ENCODE measurements at regions of chr19 and their contacts with region 1.

Region 1: GRCh38 chr19:35693830-35694599 is 10.3 kb upstream of the ZBTB32 start:
- DNase-seq: peak; percentile 92
- ATAC-seq: peak; percentile 100
- H3K4me3 ChIP-seq: no peak overlapping the region
- H3K4me3 Mint-ChIP-seq: no peak overlapping the region
- H3K27ac ChIP-seq: no peak overlapping the region
- H3K27ac Mint-ChIP-seq: no peak overlapping the region
- H3K4me1 ChIP-seq: no peaks in the 10 kb centered on the region
- H3K4me1 Mint-ChIP-seq: no peaks in the 10 kb centered on the region
- H3K27me3 ChIP-seq: no peaks in the 10 kb centered on the region
- H3K27me3 Mint-ChIP-seq: no peaks in the 10 kb centered on the region
- CTCF ChIP-seq: peak; percentile 99

Region 2: DNA sequence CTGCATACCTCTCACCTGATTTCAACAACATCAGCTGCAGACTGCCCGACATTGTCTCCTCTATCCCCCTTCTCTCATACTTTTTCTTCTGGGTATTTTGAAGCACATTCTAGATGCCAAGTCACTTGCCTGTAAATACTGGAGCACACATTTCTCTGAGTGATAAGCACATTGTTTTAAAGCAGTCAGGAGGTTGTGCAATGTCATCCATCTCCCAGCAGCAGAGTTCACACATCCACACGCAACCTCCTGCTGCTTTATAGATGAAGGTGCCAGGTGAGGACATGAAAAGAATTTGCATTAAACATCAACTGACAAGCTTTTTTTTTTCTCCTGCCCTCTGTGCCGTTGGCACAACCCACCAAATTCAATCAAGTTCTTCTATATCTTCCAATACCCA is 22.2 kb before region 1 on chr19:
- CTCF ChIA-PET with region 1: no interaction called
- POLR2A ChIA-PET with region 1: no interaction called
- intact Hi-C with region 1: no loop called
- DNase-seq: no peak
- ATAC-seq: no peak
- H3K4me3 ChIP-seq: no peak overlapping the region
- H3K4me3 Mint-ChIP-seq: no peak overlapping the region
- H3K27ac ChIP-seq: no peak overlapping the region
- H3K27ac Mint-ChIP-seq: no peak overlapping the region
- H3K4me1 ChIP-seq: peaks cover 8 to 9% of the 10 kb centered on the region in 2 donors
- H3K4me1 Mint-ChIP-seq: peaks cover 7% of the 10 kb centered on the region
- H3K27me3 ChIP-seq: peaks cover 0 to 37% (median 13%) of the 10 kb centered on the region in 4 experiments
- H3K27me3 Mint-ChIP-seq: peaks cover 30% of the 10 kb centered on the region
- CTCF ChIP-seq: no peak

Region 3: DNA sequence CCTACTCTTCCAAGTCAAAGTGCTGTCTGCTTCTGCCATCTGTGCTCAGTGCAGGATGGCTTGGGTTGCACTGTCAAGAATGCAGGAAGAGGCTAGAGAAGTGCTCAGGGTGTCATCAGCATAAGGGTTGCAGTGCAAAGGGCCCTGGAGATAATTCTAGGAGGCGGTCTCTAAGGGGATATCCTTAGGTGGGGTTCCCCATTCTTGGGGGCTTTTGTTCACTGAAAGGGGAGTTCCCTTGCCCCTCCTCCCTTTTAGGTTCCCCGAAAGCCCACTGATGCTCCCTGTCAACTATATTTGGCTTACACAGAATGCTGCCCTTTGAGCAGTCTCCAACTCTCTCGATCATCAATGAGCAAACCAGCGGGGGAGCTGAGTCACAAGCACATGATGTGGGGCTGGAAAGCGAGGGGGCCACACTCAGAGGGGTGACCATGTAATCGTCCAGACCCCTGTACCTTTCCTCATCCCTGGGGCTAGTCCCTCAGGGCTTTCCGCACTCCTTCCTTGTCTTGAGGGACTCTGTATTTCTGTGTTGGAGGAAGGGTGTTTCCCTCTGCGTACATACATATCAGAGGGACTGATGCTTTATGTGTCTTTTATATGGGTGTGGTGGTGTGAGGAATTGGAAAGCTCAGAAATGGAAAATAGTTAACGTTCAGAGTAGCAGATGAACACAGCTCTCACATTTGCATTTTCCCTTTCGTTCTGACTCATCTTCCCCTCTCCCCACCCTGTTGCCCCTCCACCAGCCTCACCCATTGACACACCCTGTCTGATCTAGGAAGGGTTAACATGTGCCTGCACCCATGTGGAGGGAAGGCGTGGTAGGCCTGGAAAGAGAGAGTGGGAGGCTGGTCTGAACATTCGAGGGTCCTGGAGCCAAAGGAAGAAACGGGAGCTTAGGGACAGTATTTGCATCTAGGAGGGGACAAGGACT is 17.0 kb after region 1 on chr19:
- CTCF ChIA-PET with region 1: interaction called, 123 read pairs
- POLR2A ChIA-PET with region 1: interaction called, 7 read pairs
- intact Hi-C with region 1: loop called (anchors 1 kb)
- DNase-seq: peak; percentile 73
- ATAC-seq: peak; percentile 55
- H3K4me3 ChIP-seq: peak overlapping the region in 2 of 5 experiments; percentile 23 to 30
- H3K4me3 Mint-ChIP-seq: peak overlapping the region; percentile 98
- H3K27ac ChIP-seq: peak overlapping the region; percentile 85
- H3K27ac Mint-ChIP-seq: peak overlapping the region; percentile 99
- H3K4me1 ChIP-seq: peaks cover 29 to 64% of the 10 kb centered on the region in 2 donors
- H3K4me1 Mint-ChIP-seq: peaks cover 54% of the 10 kb centered on the region
- H3K27me3 ChIP-seq: no peaks in the 10 kb centered on the region
- H3K27me3 Mint-ChIP-seq: no peaks in the 10 kb centered on the region
- CTCF ChIP-seq: no peak

Region 4: DNA sequence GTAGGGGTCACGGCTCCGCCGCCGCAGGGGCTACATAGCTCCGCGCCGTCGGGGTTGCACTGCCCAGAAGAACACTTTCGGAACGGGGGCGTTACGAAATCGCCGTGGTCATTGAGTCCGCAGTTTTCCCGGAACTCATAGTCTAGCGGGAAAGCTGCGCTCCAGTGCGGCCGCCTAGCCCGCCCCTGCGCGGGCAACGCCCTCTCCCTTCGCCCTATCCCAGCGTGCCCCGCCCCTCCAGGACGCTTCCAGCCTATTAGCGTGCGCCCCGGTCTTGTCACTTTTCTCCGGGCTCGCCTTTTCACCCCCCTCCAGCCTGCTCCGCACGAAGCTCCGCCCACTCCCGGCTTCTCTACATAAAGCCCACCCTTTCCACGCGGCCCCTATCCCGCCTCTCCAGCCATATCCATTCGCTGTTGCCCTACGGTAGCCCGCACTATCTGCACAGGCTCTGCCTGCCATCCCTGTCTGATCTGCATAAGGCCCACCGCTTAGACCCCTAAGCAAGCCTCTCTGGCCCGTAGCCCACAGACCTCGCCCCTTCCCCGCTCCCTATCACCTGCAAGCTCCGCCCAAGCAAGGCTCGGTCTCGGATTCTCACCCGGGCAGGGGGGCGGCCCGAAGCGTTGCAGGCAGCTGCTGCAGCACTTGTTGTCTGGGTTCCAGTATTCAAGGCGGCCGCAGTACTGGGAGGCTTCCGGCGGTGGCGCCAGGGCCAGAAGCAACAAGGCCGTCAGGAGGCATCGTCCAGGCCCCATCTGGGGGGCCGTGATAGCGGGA is 46.6 kb after region 1 on chr19:
- CTCF ChIA-PET with region 1: interaction called, 6 read pairs
- POLR2A ChIA-PET with region 1: no interaction called
- intact Hi-C with region 1: loop called (anchors 2 kb)
- DNase-seq: peak; percentile 95
- ATAC-seq: peak; percentile 64
- H3K4me3 ChIP-seq: peak overlapping the region; percentile 60 to 93 (median 83)
- H3K4me3 Mint-ChIP-seq: peak overlapping the region; percentile 96
- H3K27ac ChIP-seq: peak overlapping the region; percentile 59 to 73
- H3K27ac Mint-ChIP-seq: peak overlapping the region; percentile 92
- H3K4me1 ChIP-seq: peaks cover 34 to 64% of the 10 kb centered on the region in 2 donors
- H3K4me1 Mint-ChIP-seq: peaks cover 57% of the 10 kb centered on the region
- H3K27me3 ChIP-seq: no peaks in the 10 kb centered on the region
- H3K27me3 Mint-ChIP-seq: no peaks in the 10 kb centered on the region
- CTCF ChIP-seq: no peak

Region 5: GRCh38 chr19:35757749-35758608 is 64.0 kb after region 1 on chr19 and contains the start of gene PROSER3:
- CTCF ChIA-PET with region 1: interaction called, 6 read pairs
- POLR2A ChIA-PET with region 1: no interaction called
- intact Hi-C with region 1: loop called (anchors 5 kb)
- DNase-seq: peak; percentile 99
- ATAC-seq: peak; percentile 95
- H3K4me3 ChIP-seq: peak within 1 kb of the TSS; percentile 85 to 99 (median 94)
- H3K4me3 Mint-ChIP-seq: peak within 1 kb of the TSS; percentile 99
- H3K27ac ChIP-seq: peak within 1 kb of the TSS; percentile 91 to 96
- H3K27ac Mint-ChIP-seq: peak within 1 kb of the TSS; percentile 99
- H3K4me1 ChIP-seq: peaks cover 24 to 35% of the 10 kb centered on the region in 2 donors
- H3K4me1 Mint-ChIP-seq: peaks cover 34% of the 10 kb centered on the region
- H3K27me3 ChIP-seq: peaks cover 0 to 26% (median 10%) of the 10 kb centered on the region in 4 experiments
- H3K27me3 Mint-ChIP-seq: peaks cover 17% of the 10 kb centered on the region
- CTCF ChIP-seq: no peak
- total RNA-seq, gene PROSER3: 61.0 and 65.6 TPM in 2 replicates

Region 6: GRCh38 chr19:35775298-35776110 is 81.5 kb after region 1 on chr19 and contains the start of gene ARHGAP33:
- CTCF ChIA-PET with region 1: no interaction called
- POLR2A ChIA-PET with region 1: no interaction called
- intact Hi-C with region 1: loop called (anchors 1 kb)
- DNase-seq: peak; percentile 99
- ATAC-seq: peak; percentile 99
- H3K4me3 ChIP-seq: peak within 1 kb of the TSS; percentile 26 to 68 (median 58)
- H3K4me3 Mint-ChIP-seq: peak within 1 kb of the TSS; percentile 86
- H3K27ac ChIP-seq: peak within 1 kb of the TSS in 1 of 2 donors; percentile 19
- H3K27ac Mint-ChIP-seq: peak within 1 kb of the TSS; percentile 43
- H3K4me1 ChIP-seq: peaks cover 10 to 16% of the 10 kb centered on the region in 2 donors
- H3K4me1 Mint-ChIP-seq: peaks cover 10% of the 10 kb centered on the region
- H3K27me3 ChIP-seq: no peaks in the 10 kb centered on the region
- H3K27me3 Mint-ChIP-seq: no peaks in the 10 kb centered on the region
- CTCF ChIP-seq: no peak
- total RNA-seq, gene ARHGAP33: 18.2 and 21.6 TPM in 2 replicates

Region 7: GRCh38 chr19:35882114-35882832 is 188.3 kb after region 1 on chr19:
- CTCF ChIA-PET with region 1: interaction called, 9 read pairs
- POLR2A ChIA-PET with region 1: no interaction called
- intact Hi-C with region 1: loop called (anchors 1 kb)
- DNase-seq: peak; percentile 84
- ATAC-seq: peak; percentile 63
- H3K4me3 ChIP-seq: no peak overlapping the region
- H3K4me3 Mint-ChIP-seq: no peak overlapping the region
- H3K27ac ChIP-seq: no peak overlapping the region
- H3K27ac Mint-ChIP-seq: peak overlapping the region; percentile 59
- H3K4me1 ChIP-seq: peaks cover 4 to 7% of the 10 kb centered on the region in 2 donors
- H3K4me1 Mint-ChIP-seq: peaks cover 17% of the 10 kb centered on the region
- H3K27me3 ChIP-seq: peaks cover 0 to 28% (median 12%) of the 10 kb centered on the region in 4 experiments
- H3K27me3 Mint-ChIP-seq: peaks cover 22% of the 10 kb centered on the region
- CTCF ChIP-seq: peak; percentile 80

Region 8: DNA sequence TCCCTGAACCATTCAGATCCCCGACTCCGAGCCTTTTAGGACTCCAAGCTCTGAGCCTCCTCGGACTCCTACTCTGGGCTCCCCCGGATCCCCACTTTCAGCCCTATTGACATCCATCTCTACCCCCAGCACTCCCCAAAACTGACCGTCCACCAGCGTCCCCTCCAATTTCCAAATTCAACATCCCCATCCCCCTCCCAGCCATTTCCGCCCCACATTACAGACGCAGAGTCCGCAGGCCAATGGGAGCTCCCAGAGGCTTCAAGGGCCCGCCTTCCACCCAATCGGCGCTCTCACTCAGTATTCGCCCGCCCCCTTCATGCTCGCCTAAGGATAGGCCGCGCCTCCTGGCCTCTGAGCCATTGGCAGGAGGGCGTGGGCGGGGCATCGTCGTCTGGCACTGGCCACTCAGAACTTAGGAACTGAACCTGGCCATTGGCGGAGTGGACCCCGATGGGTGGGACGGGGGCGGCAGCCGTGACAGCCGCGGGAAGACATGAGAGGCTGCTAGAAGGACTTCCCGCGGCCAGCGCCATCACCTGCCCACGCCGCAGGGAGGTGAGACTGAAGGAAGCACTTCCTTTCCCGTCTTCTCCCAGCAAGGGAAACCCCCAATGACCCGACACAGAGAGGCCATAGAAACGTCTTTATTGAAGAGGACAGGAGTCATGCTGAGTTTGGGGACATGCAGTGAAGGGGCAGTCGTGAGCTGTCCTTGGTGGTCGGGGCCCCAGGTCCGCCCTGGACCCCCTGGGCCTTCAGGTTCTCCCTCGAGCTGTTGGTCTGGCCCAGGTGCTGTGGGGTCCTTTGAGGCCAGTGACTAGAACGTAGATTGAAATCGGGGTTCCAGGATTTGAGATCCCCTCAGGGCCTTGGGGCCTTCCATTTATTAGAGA is 320.3 kb after region 1 on chr19 and contains the start of gene ALKBH6:
- CTCF ChIA-PET with region 1: no interaction called
- POLR2A ChIA-PET with region 1: no interaction called
- intact Hi-C with region 1: no loop called
- DNase-seq: peak; percentile 98
- ATAC-seq: peak; percentile 99
- H3K4me3 ChIP-seq: peak within 1 kb of the TSS; percentile 67 to 94 (median 72)
- H3K4me3 Mint-ChIP-seq: peak within 1 kb of the TSS; percentile 99
- H3K27ac ChIP-seq: peak within 1 kb of the TSS; percentile 70 to 86
- H3K27ac Mint-ChIP-seq: peak within 1 kb of the TSS; percentile 93
- H3K4me1 ChIP-seq: peaks cover 16 to 21% of the 10 kb centered on the region in 2 donors
- H3K4me1 Mint-ChIP-seq: peaks cover 28% of the 10 kb centered on the region
- H3K27me3 ChIP-seq: peaks cover 0 to 6% (median 0%) of the 10 kb centered on the region in 4 experiments
- H3K27me3 Mint-ChIP-seq: no peaks in the 10 kb centered on the region
- CTCF ChIP-seq: no peak
- total RNA-seq, gene ALKBH6: 49.4 and 54.5 TPM in 2 replicates

Measured in B cell (primary cell).